MCF 10A (cell line): ENCODE measurements at regions of chr1 and their contacts with region 1.

Region 1: GRCh38 chr1:228860911-228861831 is 125.9 kb downstream of the RHOU start:
- DNase-seq: peak; percentile 88
- H3K4me3 Mint-ChIP-seq: peak overlapping the region; percentile 1
- H3K27ac Mint-ChIP-seq: peak overlapping the region; percentile 2
- H3K4me1 Mint-ChIP-seq: peaks cover 32% of the 10 kb centered on the region
- H3K27me3 Mint-ChIP-seq: peaks cover 20% of the 10 kb centered on the region
- CTCF ChIP-seq: no peak

Region 2: DNA sequence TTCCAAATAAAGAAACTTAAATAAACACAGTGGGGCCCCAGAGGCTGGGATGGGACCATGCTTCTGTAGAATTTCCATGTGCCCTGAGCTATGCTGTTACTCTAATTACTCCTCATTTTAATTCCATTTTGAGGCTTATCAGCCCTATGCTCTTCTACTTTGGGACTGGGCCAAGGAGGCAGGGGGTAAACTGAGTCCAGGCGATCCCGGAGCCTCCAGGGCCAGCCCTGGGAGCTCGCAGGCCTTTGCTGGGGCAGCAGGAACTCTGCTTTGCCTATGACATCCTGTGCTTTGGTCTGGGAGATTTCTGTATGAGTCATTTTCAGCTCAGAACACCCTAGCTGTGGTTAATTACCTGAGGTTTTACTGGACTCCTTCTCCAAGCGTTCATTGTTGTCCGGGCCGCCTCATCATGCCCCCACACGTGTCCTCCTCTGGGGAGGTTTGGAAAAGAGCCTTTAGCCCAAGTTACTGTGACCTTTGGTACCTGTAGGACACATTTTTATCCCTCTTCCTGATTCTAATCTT is 30.2 kb before region 1 on chr1:
- CTCF ChIA-PET with region 1: interaction called, 3 read pairs
- POLR2A ChIA-PET with region 1: interaction called, 39 read pairs
- intact Hi-C with region 1: no loop called
- DNase-seq: peak; percentile 91
- H3K4me3 Mint-ChIP-seq: no peak overlapping the region
- H3K27ac Mint-ChIP-seq: peak overlapping the region; percentile 24
- H3K4me1 Mint-ChIP-seq: peaks cover 8% of the 10 kb centered on the region
- H3K27me3 Mint-ChIP-seq: peaks cover 51% of the 10 kb centered on the region
- CTCF ChIP-seq: no peak

Region 3: DNA sequence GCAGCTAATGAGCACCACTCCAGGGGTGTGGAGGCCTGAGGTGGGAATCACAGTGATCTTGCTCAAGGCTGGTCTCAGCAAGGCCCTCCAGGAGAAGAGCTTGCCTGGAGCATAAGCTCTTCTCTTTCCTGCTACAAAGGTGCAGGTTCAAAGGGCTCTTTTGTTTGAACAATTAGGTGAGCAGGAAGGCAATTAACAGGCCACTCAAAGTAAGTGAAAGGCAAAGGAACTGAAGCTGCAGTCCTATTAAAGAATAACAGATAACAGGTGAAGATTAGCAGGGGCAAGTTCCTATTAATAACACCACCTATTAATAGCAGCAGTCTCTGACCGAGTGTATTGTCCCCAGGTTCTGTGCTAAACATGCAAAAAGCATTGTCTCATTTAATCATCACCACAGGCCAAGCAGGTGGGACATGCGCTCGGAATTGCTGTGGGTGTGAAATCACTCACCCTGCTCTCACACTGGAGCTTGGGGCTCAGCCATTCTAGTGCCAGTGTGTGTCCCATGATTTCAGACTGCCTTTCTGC is 12.1 kb before region 1 on chr1:
- CTCF ChIA-PET with region 1: interaction called, 6 read pairs
- POLR2A ChIA-PET with region 1: interaction called, 43 read pairs
- intact Hi-C with region 1: no loop called
- DNase-seq: no peak
- H3K4me3 Mint-ChIP-seq: no peak overlapping the region
- H3K27ac Mint-ChIP-seq: no peak overlapping the region
- H3K4me1 Mint-ChIP-seq: no peaks in the 10 kb centered on the region
- H3K27me3 Mint-ChIP-seq: no peaks in the 10 kb centered on the region
- CTCF ChIP-seq: no peak